Endothelial cell of umbilical vein (primary cell): ENCODE measurements at regions of chr3 and their contacts with region 1.

Region 1: GRCh38 chr3:169863458-169863899 is 6.3 kb downstream of the LRRC31 start:
- DNase-seq: peak; percentile 81
- H3K4me3 ChIP-seq: no peak overlapping the region
- H3K27ac ChIP-seq: no peak overlapping the region
- H3K4me1 ChIP-seq: no peaks in the 10 kb centered on the region
- H3K27me3 ChIP-seq: peaks cover 0 to 2% of the 10 kb centered on the region in 2 experiments
- CTCF ChIP-seq: peak; percentile 81 to 86
- POLR2A ChIP-seq: no peak

Region 2: GRCh38 chr3:169133178-169134161 is 730.0 kb before region 1 on chr3:
- CTCF ChIA-PET with region 1: no interaction called
- POLR2A ChIA-PET with region 1: no interaction called
- dilution Hi-C with region 1: no loop called
- intact Hi-C with region 1: loop called (anchors 5 kb)
- DNase-seq: peak; percentile 83
- H3K4me3 ChIP-seq: no peak overlapping the region
- H3K27ac ChIP-seq: peak overlapping the region; percentile 52
- H3K4me1 ChIP-seq: peaks cover 44% of the 10 kb centered on the region
- H3K27me3 ChIP-seq: no peaks in the 10 kb centered on the region
- CTCF ChIP-seq: peak in 1 of 2 donors; percentile 16
- POLR2A ChIP-seq: peak; percentile 17

Region 3: DNA sequence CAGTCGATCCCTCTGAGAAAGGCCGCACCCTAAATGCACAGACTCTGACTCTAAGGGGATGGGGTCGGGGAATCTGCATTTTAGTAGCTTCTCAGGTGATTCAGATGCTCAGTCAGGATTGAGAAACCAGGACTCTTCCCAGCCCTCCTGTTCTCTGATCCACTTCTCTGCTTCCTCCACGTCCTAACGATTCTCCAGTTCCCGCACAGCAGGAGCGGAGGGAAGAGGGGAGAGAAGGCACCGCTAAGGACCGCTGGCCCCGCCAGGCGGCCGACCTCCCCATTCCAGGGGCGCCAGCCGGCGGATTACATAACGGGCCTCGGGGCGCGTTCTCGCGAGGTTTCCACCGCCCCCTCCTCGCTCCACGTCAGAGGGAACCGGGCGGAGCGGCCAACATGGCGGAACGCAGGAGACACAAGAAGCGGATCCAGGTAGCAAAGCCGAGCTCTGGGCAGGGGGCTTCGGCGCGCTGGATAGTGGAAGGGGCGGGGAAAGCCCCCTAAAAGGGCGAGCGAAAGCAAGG is 103.0 kb after region 1 on chr3 and contains the start of gene SEC62:
- CTCF ChIA-PET with region 1: interaction called, 3 read pairs
- POLR2A ChIA-PET with region 1: no interaction called
- dilution Hi-C with region 1: no loop called
- intact Hi-C with region 1: loop called (anchors 1 kb)
- DNase-seq: peak; percentile 94
- H3K4me3 ChIP-seq: peak within 1 kb of the TSS; percentile 25 to 87 (median 83)
- H3K27ac ChIP-seq: peak within 1 kb of the TSS; percentile 56
- H3K4me1 ChIP-seq: peaks cover 18% of the 10 kb centered on the region
- H3K27me3 ChIP-seq: peaks cover 0 to 8% of the 10 kb centered on the region in 2 experiments
- CTCF ChIP-seq: peak; percentile 20 to 49
- POLR2A ChIP-seq: peak; percentile 72
- total RNA-seq, gene SEC62: 77.8 and 90.8 TPM in 2 replicates

Region 4: DNA sequence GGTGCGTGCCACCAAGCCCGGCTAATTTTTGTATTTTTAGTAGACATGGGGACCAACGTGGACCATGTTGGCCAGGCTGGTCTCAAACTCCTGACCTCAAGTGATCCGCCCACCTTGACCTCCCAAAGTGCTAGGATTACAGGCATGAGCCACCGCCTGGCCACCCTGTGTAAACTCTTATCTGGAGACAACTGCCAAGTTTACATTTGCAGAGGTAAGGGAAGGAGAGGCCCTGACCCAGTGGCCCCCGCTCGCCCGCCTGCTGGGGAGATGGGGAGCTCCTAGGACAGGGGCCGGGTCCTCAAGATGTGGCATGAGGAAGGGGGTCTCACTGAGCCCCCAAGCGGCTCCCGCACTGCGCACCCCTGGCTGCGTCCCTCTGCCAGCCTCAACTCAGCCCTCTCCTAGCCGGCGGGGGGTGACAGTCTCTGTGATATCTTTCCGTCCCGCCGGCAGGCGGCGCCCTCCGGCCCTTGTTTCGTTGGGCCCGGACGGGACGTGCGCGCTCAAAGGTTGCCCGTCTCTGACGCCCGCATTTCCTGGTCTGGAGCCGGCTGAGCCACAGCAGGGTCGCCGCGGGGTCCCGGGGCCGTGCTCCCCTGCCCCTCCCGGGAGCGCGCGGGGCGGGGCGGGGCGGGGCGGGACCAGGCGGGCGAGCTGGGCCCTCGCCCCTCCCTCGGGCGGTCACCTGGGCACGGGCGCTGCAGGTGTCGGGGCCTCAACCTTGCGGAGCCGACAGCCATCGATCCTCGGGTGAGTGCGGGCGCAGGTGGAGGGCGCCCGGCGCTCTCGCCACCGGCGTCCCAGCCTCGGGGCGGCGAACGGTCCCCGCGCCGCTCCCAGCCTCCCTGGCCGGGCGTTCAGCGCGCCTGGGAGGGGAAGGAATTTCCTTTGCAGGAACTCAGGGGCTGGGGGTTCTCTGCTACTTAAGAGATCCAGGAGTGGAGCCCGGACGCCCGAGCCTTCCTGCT is 174.3 kb after region 1 on chr3 and contains the start of gene GPR160:
- CTCF ChIA-PET with region 1: no interaction called
- POLR2A ChIA-PET with region 1: no interaction called
- dilution Hi-C with region 1: no loop called
- intact Hi-C with region 1: loop called (anchors 5 kb)
- DNase-seq: peak; percentile 26
- H3K4me3 ChIP-seq: peak within 1 kb of the TSS; percentile 30 to 43 (median 38)
- H3K27ac ChIP-seq: no peak within 1 kb of the TSS
- H3K4me1 ChIP-seq: peaks cover 5% of the 10 kb centered on the region
- H3K27me3 ChIP-seq: peaks cover 31 to 33% of the 10 kb centered on the region in 2 experiments
- CTCF ChIP-seq: peak; percentile 48 to 79
- POLR2A ChIP-seq: no peak
- total RNA-seq, gene GPR160: 1.1 and 1.3 TPM in 2 replicates

Region 5: DNA sequence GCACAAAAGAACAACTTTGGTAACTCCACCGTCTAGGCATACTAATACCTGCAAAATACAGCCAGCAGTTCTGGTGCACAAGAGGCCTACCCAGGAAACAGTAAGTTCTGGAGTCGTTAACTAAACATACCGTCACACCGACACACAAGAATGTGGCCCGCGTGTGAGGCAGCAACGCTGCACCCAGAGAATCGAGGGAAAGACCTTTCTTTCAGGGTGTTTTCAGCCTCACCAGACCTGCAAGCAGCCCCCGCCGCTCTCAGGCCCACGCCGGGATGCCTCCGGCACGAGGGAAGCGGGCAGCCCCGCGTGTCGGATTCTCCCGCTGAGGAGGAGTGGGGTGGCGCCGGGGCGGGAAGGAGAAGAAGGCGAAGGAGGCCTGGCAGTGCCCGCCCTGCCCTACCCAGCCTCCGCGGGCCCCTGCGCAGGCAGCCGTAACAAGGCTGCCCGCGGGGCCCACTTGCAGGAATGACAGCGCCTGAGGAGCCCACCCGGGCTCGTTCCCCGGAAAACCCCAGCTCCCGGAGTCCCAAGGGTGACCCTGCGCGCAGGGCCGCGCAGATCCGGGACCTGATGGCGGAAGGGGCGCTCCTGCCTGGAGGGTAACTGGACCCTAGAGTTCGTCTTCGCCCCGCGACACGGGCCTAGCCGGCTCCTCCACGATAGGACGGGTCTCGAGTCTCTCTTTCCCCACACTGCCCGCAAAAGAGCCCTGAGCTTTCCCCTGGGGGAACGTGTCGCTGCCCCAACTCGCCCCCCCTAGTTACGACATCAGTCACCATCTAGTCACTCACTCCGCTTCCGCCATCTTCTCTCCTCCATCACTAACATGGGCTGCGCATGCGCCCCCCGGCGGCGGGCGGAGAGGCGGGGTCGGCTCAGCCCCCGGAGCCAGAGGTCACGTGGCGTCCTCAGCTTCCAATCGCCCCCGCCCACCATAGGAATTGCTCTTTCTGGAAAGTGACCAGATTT is 317.7 kb after region 1 on chr3 and contains the start of gene PHC3:
- CTCF ChIA-PET with region 1: no interaction called
- POLR2A ChIA-PET with region 1: no interaction called
- dilution Hi-C with region 1: no loop called
- intact Hi-C with region 1: loop called (anchors 10 kb)
- DNase-seq: peak; percentile 95
- H3K4me3 ChIP-seq: peak within 1 kb of the TSS; percentile 50 to 88 (median 77)
- H3K27ac ChIP-seq: peak within 1 kb of the TSS; percentile 44
- H3K4me1 ChIP-seq: peaks cover 11% of the 10 kb centered on the region
- H3K27me3 ChIP-seq: no peaks in the 10 kb centered on the region
- CTCF ChIP-seq: no peak
- POLR2A ChIP-seq: peak; percentile 90
- total RNA-seq, gene PHC3: 34.4 and 45.8 TPM in 2 replicates